Thyroid gland (tissue), 4 donors: ENCODE measurements at regions of chr3 and their contacts with region 1.

Region 1: DNA sequence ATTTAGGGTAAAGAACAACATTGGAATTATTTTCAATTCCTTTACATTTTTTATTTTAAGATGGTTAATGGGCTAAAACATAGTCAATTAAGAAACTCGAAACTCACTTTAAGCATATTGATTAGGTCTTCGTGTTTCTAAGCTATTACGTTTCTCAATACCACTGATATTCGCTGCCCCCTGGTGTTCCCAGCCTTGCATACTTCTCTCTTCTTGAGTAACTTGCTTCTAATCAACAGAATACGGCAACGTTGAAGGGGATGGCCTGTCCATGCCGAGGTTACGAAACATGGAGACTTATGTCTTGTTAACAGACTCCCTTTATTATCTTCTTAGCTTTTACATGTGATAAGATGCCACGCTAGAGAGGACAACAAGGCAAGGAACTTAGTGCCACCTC is 43.6 kb downstream of the ROBO1 start:
- DNase-seq: peak; percentile 54 to 61
- H3K4me3 ChIP-seq: no peak overlapping the region
- H3K27ac ChIP-seq: no peak overlapping the region
- H3K4me1 ChIP-seq: no peaks in the 10 kb centered on the region
- H3K27me3 ChIP-seq: no peaks in the 10 kb centered on the region
- CTCF ChIP-seq: peak in 4 of 6 experiments; percentile 48 to 69 (median 59)
- POLR2A ChIP-seq: no peak

Region 2: GRCh38 chr3:79521238-79521848 is 202.9 kb before region 1 on chr3:
- intact Hi-C with region 1: loop called (anchors 5 kb)
- DNase-seq: no peak
- H3K4me3 ChIP-seq: no peak overlapping the region
- H3K27ac ChIP-seq: no peak overlapping the region
- H3K4me1 ChIP-seq: no peaks in the 10 kb centered on the region
- H3K27me3 ChIP-seq: no peaks in the 10 kb centered on the region
- CTCF ChIP-seq: peak in 5 of 6 experiments; percentile 36 to 80 (median 62)
- POLR2A ChIP-seq: no peak